K562 (cell line): ENCODE measurements at regions of chr1 and their contacts with region 1.

Region 1: GRCh38 chr1:46197964-46198811 is at the start of gene POMGNT1:
- DNase-seq: peak; percentile 83 to 98 (median 96)
- ATAC-seq: peak; percentile 89
- H3K4me3 ChIP-seq: peak within 1 kb of the TSS; percentile 83
- H3K27ac ChIP-seq: peak within 1 kb of the TSS; percentile 84
- H3K4me1 ChIP-seq: peaks cover 24 to 32% of the 10 kb centered on the region in 2 experiments
- H3K27me3 ChIP-seq: no peaks in the 10 kb centered on the region
- CTCF ChIP-seq: peak; percentile 32 to 59 (median 56); a peak in 5 of 6 replicates
- EP300 ChIP-seq: no peak
- POLR2A ChIP-seq: peak; percentile 85
- RAD21 ChIP-seq: peak in 1 of 2 experiments; percentile 66; a peak in 3 of 4 replicates
- polyA plus RNA-seq, gene POMGNT1: 14.1 to 27.9 TPM

Region 2: GRCh38 chr1:45643978-45644377 is 554.2 kb before region 1 on chr1:
- CTCF ChIA-PET with region 1: no interaction called
- POLR2A ChIA-PET with region 1: no interaction called
- in situ Hi-C with region 1: loop called (anchors 25 kb)
- intact Hi-C with region 1: no loop called
- DNase-seq: no peak
- ATAC-seq: peak; percentile 43; the same call in 2 of the 3 replicates
- H3K4me3 ChIP-seq: no peak overlapping the region
- H3K27ac ChIP-seq: no peak overlapping the region
- H3K4me1 ChIP-seq: no peaks in the 10 kb centered on the region
- H3K27me3 ChIP-seq: no peaks in the 10 kb centered on the region
- CTCF ChIP-seq: peak in 1 of 3 experiments; percentile 16; a peak in 3 of 6 replicates
- EP300 ChIP-seq: no peak
- POLR2A ChIP-seq: no peak
- RAD21 ChIP-seq: peak in 1 of 2 experiments; percentile 34; a peak in 1 of 4 replicates

Region 3: GRCh38 chr1:46113948-46114347 is 84.2 kb before region 1 on chr1:
- CTCF ChIA-PET with region 1: no interaction called
- POLR2A ChIA-PET with region 1: no interaction called
- in situ Hi-C with region 1: no loop called
- intact Hi-C with region 1: no loop called
- DNase-seq: peak in 3 of 4 experiments; percentile 19 to 42 (median 32)
- ATAC-seq: peak; percentile 80
- H3K4me3 ChIP-seq: no peak overlapping the region
- H3K27ac ChIP-seq: peak overlapping the region; percentile 27; the same call in 2 of the 3 replicates
- H3K4me1 ChIP-seq: peaks cover 7 to 11% of the 10 kb centered on the region in 2 experiments; a peak in 4 of 5 replicates
- H3K27me3 ChIP-seq: no peaks in the 10 kb centered on the region
- CTCF ChIP-seq: no peak
- EP300 ChIP-seq: no peak
- POLR2A ChIP-seq: no peak
- RAD21 ChIP-seq: no peak

Region 4: DNA sequence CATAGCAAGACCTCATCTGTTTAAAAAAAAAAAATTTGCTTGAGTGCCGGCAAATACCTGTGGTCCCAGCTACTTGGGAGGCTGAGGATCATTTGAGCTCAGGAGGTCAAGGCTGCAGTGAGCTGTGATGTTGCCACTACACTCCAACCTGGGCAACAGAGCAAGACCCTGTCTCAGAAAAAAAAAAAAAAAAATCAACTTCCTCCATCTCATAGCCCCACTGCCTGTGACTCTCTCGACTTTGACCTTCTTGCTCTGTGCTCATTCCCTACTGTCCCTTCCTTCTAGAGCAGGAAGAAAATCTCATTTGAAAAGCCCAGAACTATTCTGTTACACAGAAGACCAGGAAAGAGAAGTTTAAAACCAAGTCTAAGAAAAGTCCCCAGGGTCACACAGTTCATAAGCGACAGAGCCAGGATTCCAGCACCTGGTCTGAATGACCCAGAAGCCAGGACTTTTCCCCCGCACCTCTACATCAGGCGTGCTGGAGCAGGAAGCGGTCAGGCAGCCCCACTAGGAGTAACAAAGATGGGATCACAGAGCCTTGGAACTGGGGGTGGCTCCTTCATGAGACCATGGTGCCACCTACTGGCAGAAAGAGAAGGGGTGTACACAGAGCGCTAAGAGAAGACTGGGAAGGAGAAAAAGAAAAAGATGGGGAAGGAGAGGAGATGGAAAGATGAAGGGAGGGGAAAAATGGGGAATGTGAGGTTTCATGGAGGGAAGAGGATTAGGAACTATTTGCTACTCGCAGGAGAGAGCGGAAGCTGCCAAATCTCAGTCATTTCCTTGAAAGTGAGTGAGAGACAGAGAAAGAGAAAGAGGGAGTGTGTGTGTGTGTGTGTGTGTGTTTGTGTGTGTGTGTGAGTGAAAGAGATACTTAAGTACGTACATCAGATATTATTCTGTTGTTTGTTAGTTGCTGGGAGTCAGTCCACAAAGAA is 18.8 kb before region 1 on chr1:
- CTCF ChIA-PET with region 1: no interaction called
- POLR2A ChIA-PET with region 1: interaction called, 6 read pairs
- in situ Hi-C with region 1: no loop called
- intact Hi-C with region 1: loop called (anchors 2 kb)
- DNase-seq: peak; percentile 91 to 92 (median 92)
- ATAC-seq: peak; percentile 95
- H3K4me3 ChIP-seq: no peak overlapping the region
- H3K27ac ChIP-seq: no peak overlapping the region
- H3K4me1 ChIP-seq: peaks cover 22 to 23% of the 10 kb centered on the region in 2 experiments
- H3K27me3 ChIP-seq: no peaks in the 10 kb centered on the region
- CTCF ChIP-seq: peak; percentile 95 to 98 (median 96)
- EP300 ChIP-seq: no peak
- POLR2A ChIP-seq: no peak
- RAD21 ChIP-seq: peak; percentile 100